Heart right ventricle (tissue), 16 donors: ENCODE measurements at regions of chr22 and their contacts with region 1.

Region 1: DNA sequence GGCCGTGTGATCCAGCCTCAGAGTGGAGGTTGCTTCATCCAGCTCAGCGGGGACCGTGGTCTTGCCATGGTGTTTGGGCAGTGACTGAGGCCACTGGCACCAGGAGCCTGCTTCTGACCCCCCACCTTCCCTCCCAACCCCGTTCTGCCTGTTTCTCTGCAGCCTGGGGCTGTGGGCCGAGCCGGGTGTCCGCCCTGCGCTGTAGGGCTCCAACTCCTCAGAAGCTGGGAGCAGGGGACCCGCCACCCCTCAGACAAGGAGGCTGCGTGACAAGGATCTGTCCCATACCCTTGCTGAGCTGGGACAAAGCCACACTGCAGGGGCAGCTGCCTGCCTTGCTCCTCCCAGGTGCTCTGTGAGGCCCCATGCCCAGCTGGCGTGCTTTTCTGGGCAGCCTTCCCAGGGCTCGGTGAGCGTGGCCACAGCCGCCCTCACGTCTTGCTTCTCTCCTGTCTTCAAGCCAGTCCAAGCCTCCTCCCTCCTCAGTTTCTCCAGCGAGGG is 11.7 kb upstream of the ARFGAP3 start:
- DNase-seq: peak; percentile 62 to 72
- ATAC-seq: peak; percentile 50 to 85 (median 77)
- H3K4me3 ChIP-seq: no peak overlapping the region
- H3K27ac ChIP-seq: peak overlapping the region in 9 of 10 donors; percentile 20 to 76 (median 57)
- H3K4me1 ChIP-seq: peaks cover 4 to 24% (median 15%) of the 10 kb centered on the region in 9 donors
- H3K27me3 ChIP-seq: no peaks in the 10 kb centered on the region
- CTCF ChIP-seq: no peak

Region 2: DNA sequence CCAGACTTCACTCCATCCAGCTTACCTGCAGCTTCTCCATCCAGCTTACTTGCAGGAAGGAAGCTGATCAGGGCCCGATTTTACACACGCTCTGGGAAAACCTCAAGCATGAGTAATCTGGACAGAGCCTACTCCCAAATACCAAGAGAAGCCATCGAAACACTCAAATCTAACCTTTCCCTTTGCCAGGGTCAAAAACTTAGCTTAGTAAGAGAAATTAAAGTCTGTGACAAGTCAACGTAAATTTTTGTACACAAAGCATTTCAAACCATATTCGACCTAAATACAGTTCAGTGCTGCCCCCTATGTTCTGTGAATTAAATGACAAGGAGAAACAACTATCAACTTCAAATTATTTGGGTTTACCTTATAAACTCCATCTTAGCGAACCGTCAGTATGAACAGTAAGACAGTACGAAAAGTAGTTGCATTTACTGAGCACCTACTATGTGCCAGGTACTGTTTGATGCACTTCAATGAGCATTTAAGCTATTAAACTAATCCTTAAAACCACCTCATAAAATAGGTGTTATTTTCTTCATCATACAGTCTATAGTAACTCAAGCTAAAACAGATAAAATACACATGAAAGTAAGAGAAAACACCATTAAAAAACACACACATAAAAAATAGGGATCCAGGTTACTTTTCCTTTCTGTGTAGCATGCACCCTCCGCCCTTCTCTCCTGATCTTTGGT is 48.6 kb before region 1 on chr22:
- intact Hi-C with region 1: no loop called
- DNase-seq: no peak
- ATAC-seq: peak in 4 of 8 donors; percentile 40 to 74 (median 64)
- H3K4me3 ChIP-seq: no peak overlapping the region
- H3K27ac ChIP-seq: peak overlapping the region in 5 of 10 donors; percentile 6 to 49 (median 21)
- H3K4me1 ChIP-seq: peaks cover 0 to 16% (median 9%) of the 10 kb centered on the region in 9 donors
- H3K27me3 ChIP-seq: no peaks in the 10 kb centered on the region
- CTCF ChIP-seq: peak in 8 of 9 donors; percentile 54 to 80 (median 69)

Region 3: GRCh38 chr22:42901790-42902508 is 33.1 kb after region 1 on chr22:
- intact Hi-C with region 1: loop called in 1 of 10 experiments (anchors 5 kb)
- DNase-seq: peak; percentile 61 to 74
- ATAC-seq: peak; percentile 59 to 84 (median 76)
- H3K4me3 ChIP-seq: no peak overlapping the region
- H3K27ac ChIP-seq: peak overlapping the region in 9 of 10 donors; percentile 40 to 84 (median 69)
- H3K4me1 ChIP-seq: peaks cover 37 to 90% (median 75%) of the 10 kb centered on the region in 9 donors
- H3K27me3 ChIP-seq: no peaks in the 10 kb centered on the region
- CTCF ChIP-seq: peak in 4 of 9 donors; percentile 21 to 34 (median 31)

Region 4: DNA sequence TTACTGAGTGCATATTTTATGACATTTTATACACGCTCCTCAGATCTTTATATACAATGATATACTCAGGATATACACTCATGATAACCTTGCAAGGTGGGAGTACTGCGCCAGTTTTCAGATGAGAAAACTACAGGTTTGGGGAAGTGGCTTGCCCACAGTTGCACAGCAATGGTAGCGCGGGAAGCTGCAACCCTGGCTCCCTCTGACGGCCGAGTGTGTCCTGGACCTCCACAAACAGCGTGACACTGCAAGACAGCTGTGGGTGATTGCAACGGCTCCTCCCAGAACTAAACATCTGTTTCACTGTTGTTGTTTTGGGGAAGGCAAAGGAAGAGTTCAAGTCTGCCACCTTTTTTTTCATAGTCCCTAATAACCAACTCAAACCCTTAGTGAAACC is 99.1 kb after region 1 on chr22:
- intact Hi-C with region 1: loop called in 3 of 10 experiments (anchors 5 to 10 kb)
- DNase-seq: peak; percentile 65 to 73
- ATAC-seq: peak; percentile 58 to 86 (median 78)
- H3K4me3 ChIP-seq: no peak overlapping the region
- H3K27ac ChIP-seq: peak overlapping the region in 3 of 10 donors; percentile 19 to 33 (median 24)
- H3K4me1 ChIP-seq: peaks cover 0 to 71% (median 35%) of the 10 kb centered on the region in 9 donors
- H3K27me3 ChIP-seq: no peaks in the 10 kb centered on the region
- CTCF ChIP-seq: peak in 7 of 9 donors; percentile 29 to 61 (median 36)

Region 5: GRCh38 chr22:43014869-43015676 is 146.3 kb after region 1 on chr22 and contains the start of gene PACSIN2:
- intact Hi-C with region 1: loop called in 1 of 10 experiments (anchors 10 kb)
- DNase-seq: peak; percentile 100
- ATAC-seq: peak; percentile 99 to 100 (median 100)
- H3K4me3 ChIP-seq: peak within 1 kb of the TSS; percentile 54 to 92 (median 82)
- H3K27ac ChIP-seq: peak within 1 kb of the TSS; percentile 57 to 81 (median 74)
- H3K4me1 ChIP-seq: peaks cover 4 to 34% (median 16%) of the 10 kb centered on the region in 9 donors
- H3K27me3 ChIP-seq: no peaks in the 10 kb centered on the region
- CTCF ChIP-seq: no peak
- total RNA-seq, gene PACSIN2: 45.0 to 69.7 (median 57.8) TPM

Region 6: DNA sequence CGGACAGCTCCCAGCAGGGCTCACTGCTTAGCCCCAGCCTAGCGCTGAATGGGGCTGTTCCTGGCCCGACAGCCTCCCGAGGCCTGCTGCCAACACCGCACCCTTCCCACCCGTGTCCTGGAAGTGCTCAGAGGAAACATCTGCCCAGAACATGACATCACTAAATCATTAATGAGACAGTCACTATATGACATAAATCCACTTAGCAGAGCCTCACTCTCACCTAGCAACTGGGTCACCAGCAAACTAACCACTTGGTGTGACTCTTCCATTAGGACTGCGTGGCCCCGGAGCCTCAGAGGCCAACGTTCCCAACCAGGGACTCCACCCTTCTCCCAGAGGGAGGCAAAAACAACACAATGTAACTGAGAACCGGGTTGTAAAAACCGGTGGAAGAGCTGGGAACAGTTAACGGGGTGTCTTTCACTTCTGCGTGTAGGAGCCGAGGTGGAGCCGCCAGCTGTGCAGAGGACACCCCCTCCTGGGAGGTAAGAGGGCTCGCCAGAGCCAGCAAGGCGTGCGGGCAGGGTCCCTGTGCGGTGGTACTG is 167.6 kb after region 1 on chr22:
- intact Hi-C with region 1: loop called in 5 of 10 experiments (anchors 1 to 10 kb)
- DNase-seq: peak; percentile 75
- ATAC-seq: peak; percentile 83 to 96 (median 93)
- H3K4me3 ChIP-seq: peak overlapping the region in 2 of 10 donors; percentile 13 to 20
- H3K27ac ChIP-seq: peak overlapping the region in 6 of 10 donors; percentile 25 to 60 (median 44)
- H3K4me1 ChIP-seq: peaks cover 0 to 24% (median 7%) of the 10 kb centered on the region in 9 donors
- H3K27me3 ChIP-seq: no peaks in the 10 kb centered on the region
- CTCF ChIP-seq: no peak

Region 7: GRCh38 chr22:43088979-43089717 is 220.3 kb after region 1 on chr22 and contains the start of gene TTLL1:
- intact Hi-C with region 1: loop called in 4 of 10 experiments (anchors 1 to 10 kb)
- DNase-seq: peak; percentile 88 to 91
- ATAC-seq: peak; percentile 91 to 96 (median 95)
- H3K4me3 ChIP-seq: peak within 1 kb of the TSS; percentile 51 to 100 (median 80)
- H3K27ac ChIP-seq: peak within 1 kb of the TSS in 9 of 10 donors; percentile 40 to 83 (median 71)
- H3K4me1 ChIP-seq: peaks cover 0 to 37% (median 15%) of the 10 kb centered on the region in 9 donors
- H3K27me3 ChIP-seq: no peaks in the 10 kb centered on the region
- CTCF ChIP-seq: peak in 3 of 9 donors; percentile 6 to 27 (median 14)
- total RNA-seq, gene TTLL1: 7.2 to 14.5 (median 11.0) TPM